Activated CD4-positive, alpha-beta T cell treated with anti-CD3 and anti-CD28 coated beads, Interleukin-2, amount 10 ng/mL, durations not matched to agents 24 days and 14 days (primary cell): ENCODE measurements at regions of chr6 and their contacts with region 1.

Region 1: GRCh38 chr6:52995913-52996645 is 995 bp upstream of the GSTA4 start:
- DNase-seq: peak; percentile 76
- H3K4me3 Mint-ChIP-seq: peak overlapping the region; percentile 94
- H3K27ac Mint-ChIP-seq: peak overlapping the region; percentile 99
- H3K4me1 Mint-ChIP-seq: peaks cover 39% of the 10 kb centered on the region
- H3K27me3 Mint-ChIP-seq: peaks cover 16% of the 10 kb centered on the region

Region 2: GRCh38 chr6:52227495-52227894 is 768.6 kb before region 1 on chr6:
- intact Hi-C with region 1: loop called (anchors 10 kb)
- DNase-seq: peak; percentile 90
- H3K4me3 Mint-ChIP-seq: peak overlapping the region; percentile 27
- H3K27ac Mint-ChIP-seq: peak overlapping the region; percentile 32
- H3K4me1 Mint-ChIP-seq: peaks cover 46% of the 10 kb centered on the region
- H3K27me3 Mint-ChIP-seq: peaks cover 47% of the 10 kb centered on the region

Region 3: GRCh38 chr6:52419809-52420670 is 576.0 kb before region 1 on chr6 and contains the start of gene EFHC1:
- intact Hi-C with region 1: loop called (anchors 1 kb)
- DNase-seq: peak; percentile 100
- H3K4me3 Mint-ChIP-seq: no peak within 1 kb of the TSS
- H3K27ac Mint-ChIP-seq: no peak within 1 kb of the TSS
- H3K4me1 Mint-ChIP-seq: peaks cover 23% of the 10 kb centered on the region
- H3K27me3 Mint-ChIP-seq: peaks cover 11% of the 10 kb centered on the region
- total RNA-seq, gene EFHC1: 1.5 and 1.7 TPM in 2 replicates

Region 4: GRCh38 chr6:52801188-52801841 is 194.8 kb before region 1 on chr6:
- intact Hi-C with region 1: no loop called
- DNase-seq: no peak
- H3K4me3 Mint-ChIP-seq: no peak overlapping the region
- H3K27ac Mint-ChIP-seq: no peak overlapping the region
- H3K4me1 Mint-ChIP-seq: no peaks in the 10 kb centered on the region
- H3K27me3 Mint-ChIP-seq: peaks cover 23% of the 10 kb centered on the region

Region 5: DNA sequence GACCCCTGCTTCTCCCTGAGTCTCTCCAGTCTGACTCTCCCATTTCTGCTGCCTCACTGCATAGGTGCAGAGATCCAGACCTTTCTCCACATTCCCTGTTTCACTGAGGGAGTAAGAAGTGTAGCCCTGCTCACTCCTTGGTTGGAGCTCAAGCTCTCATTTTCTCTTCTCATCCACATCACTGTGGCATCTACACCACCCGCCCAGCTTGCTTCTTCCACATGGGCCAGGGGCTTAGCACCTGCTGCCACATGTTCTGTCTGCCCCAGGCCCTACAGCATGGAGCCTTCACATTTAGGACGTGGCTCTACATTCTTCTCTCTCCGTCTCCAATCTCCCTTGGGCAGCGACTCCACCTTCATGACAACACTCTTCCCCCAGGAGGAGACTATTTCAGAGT is 146.9 kb before region 1 on chr6:
- intact Hi-C with region 1: no loop called
- DNase-seq: no peak
- H3K4me3 Mint-ChIP-seq: no peak overlapping the region
- H3K27ac Mint-ChIP-seq: no peak overlapping the region
- H3K4me1 Mint-ChIP-seq: no peaks in the 10 kb centered on the region
- H3K27me3 Mint-ChIP-seq: peaks cover 20% of the 10 kb centered on the region

Region 6: GRCh38 chr6:52881996-52882841 is 113.9 kb before region 1 on chr6:
- intact Hi-C with region 1: loop called (anchors 2 kb)
- DNase-seq: peak; percentile 90
- H3K4me3 Mint-ChIP-seq: peak overlapping the region; percentile 82
- H3K27ac Mint-ChIP-seq: peak overlapping the region; percentile 45
- H3K4me1 Mint-ChIP-seq: peaks cover 9% of the 10 kb centered on the region
- H3K27me3 Mint-ChIP-seq: no peaks in the 10 kb centered on the region

Region 7: DNA sequence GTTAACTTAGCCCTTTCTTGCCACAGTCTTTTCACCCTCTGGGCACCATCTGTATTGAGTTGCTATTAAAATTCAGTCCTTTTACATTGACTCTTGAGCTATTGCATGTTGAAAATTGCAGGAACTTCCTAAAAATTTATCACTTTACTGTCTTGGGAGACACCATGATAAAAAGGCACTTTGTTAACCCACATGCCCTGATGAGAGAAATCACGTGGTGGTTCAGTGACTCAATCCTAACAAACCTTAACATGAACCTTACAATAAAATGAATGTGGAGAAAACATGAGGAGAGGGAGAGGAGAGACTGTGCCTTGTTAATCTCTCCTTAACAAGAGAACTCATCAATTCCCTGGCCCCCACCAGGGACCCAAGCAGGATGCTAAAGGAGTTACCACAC is 31.8 kb before region 1 on chr6:
- intact Hi-C with region 1: no loop called
- DNase-seq: no peak
- H3K4me3 Mint-ChIP-seq: no peak overlapping the region
- H3K27ac Mint-ChIP-seq: no peak overlapping the region
- H3K4me1 Mint-ChIP-seq: peaks cover 1% of the 10 kb centered on the region
- H3K27me3 Mint-ChIP-seq: peaks cover 4% of the 10 kb centered on the region

Region 8: DNA sequence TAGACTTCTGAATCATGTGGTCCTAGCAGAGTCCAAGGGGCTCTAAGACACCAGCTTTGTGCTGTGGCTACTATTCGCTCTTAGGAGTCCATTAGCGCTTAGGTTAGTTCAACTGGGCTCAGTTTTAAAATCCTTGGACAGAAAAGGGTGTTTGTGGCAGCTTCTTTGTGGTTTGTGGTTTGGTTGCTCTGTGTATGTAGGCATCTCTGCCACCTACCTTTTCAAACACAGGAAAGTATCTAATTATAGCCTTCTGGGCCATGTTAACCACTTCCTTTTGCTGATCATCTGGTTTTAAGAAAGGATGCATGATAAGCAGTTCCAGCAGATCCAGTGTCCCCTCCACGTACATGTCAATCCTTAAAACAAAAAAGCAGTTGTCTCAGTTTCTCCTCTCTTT is 11.8 kb before region 1 on chr6:
- intact Hi-C with region 1: loop called (anchors 1 kb)
- DNase-seq: peak; percentile 84
- H3K4me3 Mint-ChIP-seq: peak overlapping the region; percentile 25
- H3K27ac Mint-ChIP-seq: peak overlapping the region; percentile 92
- H3K4me1 Mint-ChIP-seq: peaks cover 59% of the 10 kb centered on the region
- H3K27me3 Mint-ChIP-seq: peaks cover 2% of the 10 kb centered on the region

Region 9: GRCh38 chr6:53090576-53090975 is 94.5 kb after region 1 on chr6:
- intact Hi-C with region 1: no loop called
- DNase-seq: no peak
- H3K4me3 Mint-ChIP-seq: no peak overlapping the region
- H3K27ac Mint-ChIP-seq: no peak overlapping the region
- H3K4me1 Mint-ChIP-seq: peaks cover 6% of the 10 kb centered on the region
- H3K27me3 Mint-ChIP-seq: no peaks in the 10 kb centered on the region

Region 10: GRCh38 chr6:53544470-53545308 is 548.6 kb after region 1 on chr6 and contains the start of gene GCLC:
- intact Hi-C with region 1: loop called (anchors 10 kb)
- DNase-seq: peak; percentile 96
- H3K4me3 Mint-ChIP-seq: peak within 1 kb of the TSS; percentile 95
- H3K27ac Mint-ChIP-seq: peak within 1 kb of the TSS; percentile 95
- H3K4me1 Mint-ChIP-seq: peaks cover 35% of the 10 kb centered on the region
- H3K27me3 Mint-ChIP-seq: peaks cover 19% of the 10 kb centered on the region
- total RNA-seq, gene GCLC: 21.3 and 25.0 TPM in 2 replicates